Sciatic nerve (tissue), 2 donors: ENCODE measurements at regions of chr17 and their contacts with region 1.

Region 1: DNA sequence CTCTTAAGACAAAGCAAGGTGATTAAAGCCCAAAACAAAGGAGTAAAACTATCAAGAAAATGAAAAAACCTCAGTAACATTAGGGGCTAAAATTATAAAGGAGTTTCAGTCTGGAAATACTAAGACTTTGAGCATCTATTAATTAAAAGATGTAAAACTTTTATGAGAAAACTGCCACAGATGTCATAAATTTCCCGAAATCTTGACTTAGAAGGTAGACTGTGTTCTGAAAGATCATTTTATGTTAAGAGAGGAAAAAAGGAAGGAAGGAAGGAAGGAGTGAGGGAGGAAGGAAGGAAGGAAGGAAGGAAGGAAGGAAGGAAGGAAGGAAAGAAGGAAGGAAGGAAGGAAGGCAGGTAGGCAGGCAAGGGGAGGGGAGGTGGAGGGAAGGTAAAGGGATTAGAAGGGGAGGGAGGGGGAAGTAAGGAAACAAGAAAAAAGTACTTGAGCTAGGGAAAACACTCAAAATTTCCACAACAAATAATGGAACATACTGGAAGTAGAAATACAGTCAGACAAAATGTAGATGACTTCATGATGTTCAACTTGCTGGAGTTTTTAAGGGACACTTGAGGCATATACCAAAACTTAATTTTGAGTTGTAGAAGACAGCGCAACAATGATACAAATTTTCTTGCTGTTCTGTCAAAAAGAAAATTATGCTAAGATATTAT is 2.0 kb downstream of the KRTAP4-5 start:
- DNase-seq: no peak
- ATAC-seq: no peak

Region 2: GRCh38 chr17:40937384-40937819 is 210.3 kb before region 1 on chr17 and contains the start of gene KRT23:
- intact Hi-C with region 1: no loop called
- DNase-seq: no peak
- ATAC-seq: no peak
- total RNA-seq, gene KRT23: 0.53 TPM

Region 3: GRCh38 chr17:40963838-40964237 is 183.8 kb before region 1 on chr17:
- intact Hi-C with region 1: no loop called
- DNase-seq: no peak
- ATAC-seq: no peak

Region 4: DNA sequence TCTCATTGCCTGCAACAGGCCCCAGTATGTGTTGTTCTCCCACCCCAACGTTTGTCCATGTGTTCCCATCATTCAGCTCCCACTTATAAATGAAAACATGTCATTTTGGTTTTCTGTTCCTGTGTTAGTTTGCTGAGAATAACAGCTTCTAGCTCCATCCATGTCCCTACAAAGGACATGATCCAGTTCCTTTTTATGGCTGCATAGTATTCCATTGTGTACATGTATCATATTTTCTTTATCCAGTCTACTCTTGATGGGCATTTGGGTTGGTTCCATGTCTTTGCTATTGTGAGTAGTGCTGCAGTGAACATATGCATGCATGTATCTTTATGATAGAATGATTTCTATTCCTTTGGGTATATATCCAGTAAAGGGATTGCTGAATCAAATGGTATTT is 68.0 kb after region 1 on chr17:
- intact Hi-C with region 1: loop called (anchors 2 kb)
- DNase-seq: no peak
- ATAC-seq: no peak